Esophagus squamous epithelium (tissue), 5 donors: ENCODE measurements at regions of chr17 and their contacts with region 1.

Region 1: GRCh38 chr17:77068915-77069314 is 71.9 kb upstream of the SEC14L1 start:
- DNase-seq: no peak
- H3K4me3 ChIP-seq: no peak overlapping the region
- H3K27ac ChIP-seq: no peak overlapping the region
- H3K4me1 ChIP-seq: no peaks in the 10 kb centered on the region
- H3K27me3 ChIP-seq: peaks cover 0 to 73% (median 0%) of the 10 kb centered on the region in 4 donors
- CTCF ChIP-seq: no peak
- POLR2A ChIP-seq: no peak

Region 2: GRCh38 chr17:76868176-76868668 is 200.7 kb before region 1 on chr17 and contains the start of gene MGAT5B:
- intact Hi-C with region 1: loop called (anchors 5 kb)
- DNase-seq: no peak
- H3K4me3 ChIP-seq: peak within 1 kb of the TSS in 3 of 4 donors; percentile 26 to 65 (median 48)
- H3K27ac ChIP-seq: no peak within 1 kb of the TSS
- H3K4me1 ChIP-seq: peaks cover 4 to 33% (median 22%) of the 10 kb centered on the region in 3 donors
- H3K27me3 ChIP-seq: peaks cover 16 to 96% (median 17%) of the 10 kb centered on the region in 4 donors
- CTCF ChIP-seq: peak; percentile 59 to 95 (median 90)
- POLR2A ChIP-seq: no peak
- total RNA-seq, gene MGAT5B: 1.3 TPM in 1 of 4 donors, not detected in the others

Region 3: DNA sequence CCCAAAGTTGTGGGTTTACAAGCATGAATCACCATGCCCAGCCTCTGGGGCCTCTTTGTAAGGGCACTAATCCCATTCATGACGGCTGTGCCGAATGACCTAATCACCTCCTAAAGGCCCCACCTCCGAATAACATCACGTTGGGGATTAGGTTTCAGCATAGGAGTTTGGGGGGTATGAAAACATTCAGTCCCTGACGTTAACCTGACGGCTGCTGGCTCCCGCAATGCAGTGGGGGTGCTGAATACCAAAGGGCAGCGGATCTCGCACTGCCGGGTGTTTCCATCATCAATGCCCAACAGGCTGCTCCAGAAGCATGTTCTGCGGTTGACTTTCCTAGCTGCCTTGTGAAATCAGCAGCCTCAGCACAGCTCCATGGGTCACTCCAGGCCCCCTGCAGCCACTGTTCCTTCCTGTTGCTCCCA is 48.9 kb before region 1 on chr17:
- intact Hi-C with region 1: no loop called
- DNase-seq: no peak
- H3K4me3 ChIP-seq: no peak overlapping the region
- H3K27ac ChIP-seq: no peak overlapping the region
- H3K4me1 ChIP-seq: no peaks in the 10 kb centered on the region
- H3K27me3 ChIP-seq: peaks cover 0 to 31% (median 0%) of the 10 kb centered on the region in 4 donors
- CTCF ChIP-seq: no peak
- POLR2A ChIP-seq: no peak